Activated CD8-positive, alpha-beta T cell treated with anti-CD3 and anti-CD28 coated beads for 36 hours (primary cell): ENCODE measurements at regions of chr14 and their contacts with region 1.

Region 1: DNA sequence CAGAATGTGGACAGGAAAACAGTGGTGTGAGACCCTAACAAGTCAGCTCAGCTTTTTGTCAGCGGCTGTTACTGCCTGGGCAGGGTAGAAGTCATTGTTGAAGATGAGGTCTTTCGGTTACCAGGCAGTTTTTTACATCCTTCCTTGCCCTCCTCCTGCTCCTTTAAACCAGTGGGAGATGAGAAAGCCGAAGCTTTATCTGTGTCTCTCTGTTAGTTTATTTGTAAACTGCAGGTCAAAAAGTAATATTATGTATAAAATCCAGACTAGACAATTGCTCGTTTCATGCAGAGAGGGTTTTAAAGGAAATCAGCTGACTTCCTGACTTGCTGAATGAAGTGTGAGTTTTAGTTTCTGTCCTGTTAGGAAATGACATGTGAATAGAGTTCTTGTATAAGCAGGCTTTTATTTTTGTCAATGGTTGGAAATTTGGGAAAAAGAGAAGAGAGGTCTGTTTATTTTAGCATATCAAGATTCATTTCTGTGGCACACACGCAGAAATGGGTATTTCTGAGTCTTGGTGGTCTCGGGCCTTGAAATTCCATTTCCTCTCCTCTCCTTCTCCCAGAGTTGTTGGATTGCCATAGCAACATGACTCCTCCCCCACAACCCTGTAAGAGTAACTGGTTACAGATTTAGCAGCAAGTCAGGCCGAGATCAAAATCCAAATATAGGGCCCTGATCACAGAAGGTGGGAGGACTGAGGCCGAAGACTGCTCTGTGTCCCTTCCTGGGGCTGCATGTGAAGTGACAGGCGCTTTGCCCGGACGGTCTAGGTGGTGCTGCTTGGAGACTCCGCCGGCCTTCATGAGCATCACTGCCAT is 60.8 kb downstream of the SAMD4A start:
- DNase-seq: peak; percentile 52
- ATAC-seq: peak; percentile 76
- H3K4me3 Mint-ChIP-seq: peak overlapping the region; percentile 63
- H3K27ac Mint-ChIP-seq: peak overlapping the region; percentile 96
- H3K4me1 Mint-ChIP-seq: peaks cover 45% of the 10 kb centered on the region
- H3K27me3 Mint-ChIP-seq: no peaks in the 10 kb centered on the region
- CTCF ChIP-seq: no peak

Region 2: DNA sequence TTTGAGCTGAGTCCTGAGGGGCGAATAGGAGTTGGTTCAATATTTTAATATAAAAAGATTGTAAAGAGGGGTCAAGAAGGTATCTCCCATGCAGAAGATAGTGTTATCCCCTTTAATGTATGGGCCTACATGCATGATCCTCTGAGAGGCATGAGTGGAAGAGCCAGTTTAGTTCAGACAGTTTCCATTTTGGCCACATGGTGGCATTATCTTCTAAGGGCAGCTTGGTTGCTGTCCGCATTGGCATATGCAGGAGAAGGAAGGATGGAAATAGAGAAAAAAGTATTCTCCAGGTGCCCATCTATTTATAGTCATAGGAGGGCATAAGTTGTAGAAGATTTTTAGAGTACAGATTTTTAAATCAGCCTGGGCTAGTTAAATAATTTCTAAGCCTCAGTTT is 55.4 kb before region 1 on chr14:
- CTCF ChIA-PET with region 1: interaction called, 7 read pairs
- POLR2A ChIA-PET with region 1: no interaction called
- intact Hi-C with region 1: loop called (anchors 5 kb)
- DNase-seq: peak; percentile 57
- ATAC-seq: no peak
- H3K4me3 Mint-ChIP-seq: no peak overlapping the region
- H3K27ac Mint-ChIP-seq: no peak overlapping the region
- H3K4me1 Mint-ChIP-seq: peaks cover 11% of the 10 kb centered on the region
- H3K27me3 Mint-ChIP-seq: peaks cover 36% of the 10 kb centered on the region
- CTCF ChIP-seq: peak; percentile 72

Region 3: GRCh38 chr14:54642801-54643697 is 15.3 kb after region 1 on chr14:
- CTCF ChIA-PET with region 1: interaction called, 11 read pairs
- POLR2A ChIA-PET with region 1: no interaction called
- intact Hi-C with region 1: no loop called
- DNase-seq: peak; percentile 12
- ATAC-seq: no peak
- H3K4me3 Mint-ChIP-seq: no peak overlapping the region
- H3K27ac Mint-ChIP-seq: no peak overlapping the region
- H3K4me1 Mint-ChIP-seq: peaks cover 16% of the 10 kb centered on the region
- H3K27me3 Mint-ChIP-seq: peaks cover 3% of the 10 kb centered on the region
- CTCF ChIP-seq: no peak